Activated naive CD8-positive, alpha-beta T cell treated with anti-CD3 and anti-CD28 coated beads, Interleukin-2, amount 10 ng/mL, durations not matched to agents 7 days and 5 days (primary cell): ENCODE measurements at regions of chr11 and their contacts with region 1.

Region 1: GRCh38 chr11:62665075-62665598 is at the starts of genes C11orf98 and CSKMT:
- DNase-seq: peak; percentile 97
- ATAC-seq: peak; percentile 88
- H3K4me3 Mint-ChIP-seq: peak within 1 kb of the TSS; percentile 97
- H3K27ac Mint-ChIP-seq: peak within 1 kb of the TSS; percentile 94
- H3K4me1 Mint-ChIP-seq: peaks cover 34% of the 10 kb centered on the region
- H3K27me3 Mint-ChIP-seq: no peaks in the 10 kb centered on the region
- total RNA-seq, gene C11orf98: 99.9 to 104 TPM
- total RNA-seq, gene CSKMT: 23.3 to 27.3 TPM

Region 2: GRCh38 chr11:62591448-62592145 is 73.5 kb before region 1 on chr11 and contains the start of gene TUT1:
- POLR2A ChIA-PET with region 1: interaction called, 82 read pairs
- DNase-seq: peak; percentile 91
- ATAC-seq: peak; percentile 88
- H3K4me3 Mint-ChIP-seq: peak within 1 kb of the TSS; percentile 100
- H3K27ac Mint-ChIP-seq: peak within 1 kb of the TSS; percentile 99
- H3K4me1 Mint-ChIP-seq: peaks cover 38% of the 10 kb centered on the region
- H3K27me3 Mint-ChIP-seq: no peaks in the 10 kb centered on the region
- total RNA-seq, gene TUT1: 27.2 to 38.2 TPM

Region 3: DNA sequence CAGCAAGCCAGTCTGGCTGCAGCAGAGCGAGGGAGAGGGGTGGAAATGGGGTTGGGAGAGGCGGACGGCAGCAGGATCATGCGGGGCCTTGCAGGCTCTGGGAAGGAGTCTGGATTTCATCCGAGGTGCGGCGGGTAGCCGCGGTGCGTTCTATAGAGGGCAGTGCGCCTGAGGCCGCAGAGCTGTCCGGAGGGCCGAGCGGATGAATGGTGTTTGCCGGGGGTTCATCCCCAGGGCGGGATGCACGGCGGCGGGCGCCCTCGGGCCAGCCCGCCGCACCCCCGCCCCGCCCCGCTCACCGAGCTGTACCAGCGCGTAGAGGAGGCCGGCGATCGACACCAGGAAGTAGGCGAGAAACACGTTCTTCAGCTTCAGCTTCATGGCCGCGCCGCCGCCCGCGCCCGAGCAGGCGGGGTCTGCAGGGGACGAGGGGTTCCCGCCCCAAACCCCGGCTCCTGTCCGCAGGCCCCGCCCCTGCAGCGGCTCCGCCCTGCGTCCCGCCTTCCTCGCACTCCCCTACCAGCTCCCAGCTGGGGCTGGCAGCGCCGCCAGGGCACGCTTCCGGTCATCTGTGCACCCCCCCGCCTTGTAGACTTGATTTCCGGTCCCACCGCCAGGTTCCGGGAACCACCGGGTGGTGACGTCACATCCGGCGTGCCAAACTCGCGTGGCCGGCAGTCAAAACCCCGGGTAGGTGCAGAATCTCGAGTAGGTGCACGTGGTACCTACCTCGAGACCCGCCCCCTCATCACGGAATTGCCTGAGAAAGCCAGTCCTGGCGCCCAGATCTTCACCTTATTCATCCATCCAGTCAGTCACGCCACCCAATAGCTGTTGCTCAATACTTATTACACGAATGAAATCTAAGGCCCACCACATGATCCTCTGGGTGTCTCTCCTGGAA is 43.3 kb before region 1 on chr11 and contains the start of gene B3GAT3:
- POLR2A ChIA-PET with region 1: interaction called, 45 read pairs
- DNase-seq: peak; percentile 94
- ATAC-seq: peak; percentile 87
- H3K4me3 Mint-ChIP-seq: peak within 1 kb of the TSS; percentile 93
- H3K27ac Mint-ChIP-seq: peak within 1 kb of the TSS; percentile 99
- H3K4me1 Mint-ChIP-seq: peaks cover 24% of the 10 kb centered on the region
- H3K27me3 Mint-ChIP-seq: no peaks in the 10 kb centered on the region
- total RNA-seq, gene B3GAT3: 76.1 to 87.0 TPM

Region 4: GRCh38 chr11:62652161-62653006 is 12.8 kb before region 1 on chr11:
- POLR2A ChIA-PET with region 1: interaction called, 187 read pairs
- DNase-seq: no peak
- ATAC-seq: no peak
- H3K4me3 Mint-ChIP-seq: peak overlapping the region; percentile 94
- H3K27ac Mint-ChIP-seq: peak overlapping the region; percentile 91
- H3K4me1 Mint-ChIP-seq: peaks cover 17% of the 10 kb centered on the region
- H3K27me3 Mint-ChIP-seq: no peaks in the 10 kb centered on the region

Region 5: GRCh38 chr11:62726915-62727763 is 62.0 kb after region 1 on chr11 and contains the start of gene HNRNPUL2:
- POLR2A ChIA-PET with region 1: interaction called, 19 read pairs
- DNase-seq: peak; percentile 99
- ATAC-seq: peak; percentile 89
- H3K4me3 Mint-ChIP-seq: peak within 1 kb of the TSS; percentile 100
- H3K27ac Mint-ChIP-seq: peak within 1 kb of the TSS; percentile 98
- H3K4me1 Mint-ChIP-seq: peaks cover 41% of the 10 kb centered on the region
- H3K27me3 Mint-ChIP-seq: no peaks in the 10 kb centered on the region
- total RNA-seq, gene HNRNPUL2: 67.9 to 72.5 TPM

Region 6: GRCh38 chr11:62787005-62787759 is 122.0 kb after region 1 on chr11 and contains the start of gene TMEM179B:
- POLR2A ChIA-PET with region 1: interaction called, 10 read pairs
- DNase-seq: peak; percentile 93
- ATAC-seq: peak; percentile 73
- H3K4me3 Mint-ChIP-seq: peak within 1 kb of the TSS; percentile 92
- H3K27ac Mint-ChIP-seq: peak within 1 kb of the TSS; percentile 97
- H3K4me1 Mint-ChIP-seq: peaks cover 38% of the 10 kb centered on the region
- H3K27me3 Mint-ChIP-seq: no peaks in the 10 kb centered on the region
- total RNA-seq, gene TMEM179B: 48.7 to 52.2 TPM